GM18951 (cell line): ENCODE measurements at regions of chr2 and their contacts with region 1.

Region 1: DNA sequence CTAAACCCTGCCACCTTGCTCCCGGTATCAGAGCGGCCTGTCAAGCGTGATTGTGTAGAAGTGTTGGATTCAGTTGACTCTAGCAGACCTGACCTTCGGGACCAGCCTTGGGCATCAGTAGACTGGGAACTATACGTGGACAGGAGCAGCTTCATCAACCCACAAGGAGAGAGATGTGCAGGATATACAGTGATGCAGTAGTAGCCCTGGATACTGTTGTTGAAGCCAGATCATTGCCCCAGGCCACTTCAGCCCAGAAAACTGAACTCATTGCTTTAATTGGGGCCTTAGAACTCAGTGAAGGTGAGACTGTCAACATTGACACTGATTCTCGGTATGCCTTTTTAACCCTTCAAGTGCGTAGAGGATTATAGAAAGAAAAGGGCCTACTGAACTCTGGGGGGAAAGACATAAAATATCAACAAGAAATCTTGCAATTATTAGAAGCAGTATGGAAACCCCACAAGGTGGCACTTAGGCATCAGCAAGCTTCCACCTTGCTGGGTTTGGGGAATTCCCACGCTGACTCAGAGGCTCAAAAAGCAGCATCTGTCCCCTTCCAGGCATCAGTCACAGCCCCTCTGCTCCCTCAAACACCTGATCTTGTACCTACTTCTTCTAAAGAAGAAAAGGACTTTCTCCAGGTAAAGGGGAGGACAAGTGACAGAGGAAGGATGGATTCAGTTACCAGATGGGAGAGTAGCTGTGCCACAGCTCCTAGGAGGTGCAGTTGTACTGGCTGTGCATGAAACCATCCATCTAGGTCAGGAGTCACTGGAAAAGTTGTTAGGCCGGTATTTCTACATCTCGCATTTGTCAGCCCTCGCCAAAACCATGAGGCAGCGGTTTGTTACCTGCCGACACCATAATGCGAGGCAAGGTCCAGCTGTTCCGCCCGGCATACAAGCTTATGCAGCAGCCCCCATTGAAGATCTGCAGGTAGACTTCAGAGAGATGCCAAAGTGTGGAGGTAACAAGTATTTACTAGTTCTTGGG is 18.8 kb upstream of the NAGK start:
- POLR2A ChIP-seq: no peak

Region 2: DNA sequence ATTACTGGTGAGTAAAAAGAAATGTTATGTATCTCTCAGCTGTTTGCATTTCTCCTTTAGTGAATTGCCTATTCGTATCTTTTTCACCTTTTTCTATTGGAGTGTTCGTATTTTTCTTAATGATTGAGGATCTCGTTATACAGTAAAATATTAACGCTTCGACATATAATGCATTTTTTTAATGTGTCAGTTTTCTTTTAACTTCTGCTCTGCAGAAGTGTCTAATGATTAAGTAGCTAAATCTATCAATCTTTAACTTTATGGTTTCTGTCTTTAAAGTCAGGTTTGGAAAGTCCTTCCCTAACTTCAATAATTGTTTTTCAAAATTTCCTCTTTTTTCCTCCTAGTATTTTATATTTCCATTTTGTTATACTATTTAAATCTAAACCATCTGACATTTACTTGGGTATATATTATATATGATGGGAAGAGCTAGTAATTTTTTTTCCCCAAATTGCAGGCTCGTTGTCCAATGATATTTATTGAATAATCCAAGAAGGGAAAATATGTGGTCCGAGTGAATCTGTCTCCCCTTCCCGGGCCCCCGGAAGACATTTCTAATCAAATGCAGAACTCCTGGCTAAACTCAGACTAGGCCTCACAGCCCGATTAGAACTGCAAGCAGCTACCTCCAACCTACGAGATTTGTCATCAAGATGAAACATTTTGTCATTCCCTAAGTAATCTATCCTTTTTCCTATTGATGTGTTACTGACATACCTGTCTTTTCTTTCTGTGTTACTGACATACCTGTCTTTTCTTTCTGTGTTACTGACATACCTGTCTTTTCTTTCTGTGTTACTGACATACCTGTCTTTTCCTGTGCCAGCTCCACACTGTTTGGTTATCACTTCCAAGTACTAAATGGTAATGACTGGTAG is 945.2 kb before region 1 on chr2:
- in situ Hi-C with region 1: loop called (anchors 10 kb)
- POLR2A ChIP-seq: no peak